Adrenal gland (tissue), 19 donors: ENCODE measurements at regions of chr1 and their contacts with region 1.

Region 1: DNA sequence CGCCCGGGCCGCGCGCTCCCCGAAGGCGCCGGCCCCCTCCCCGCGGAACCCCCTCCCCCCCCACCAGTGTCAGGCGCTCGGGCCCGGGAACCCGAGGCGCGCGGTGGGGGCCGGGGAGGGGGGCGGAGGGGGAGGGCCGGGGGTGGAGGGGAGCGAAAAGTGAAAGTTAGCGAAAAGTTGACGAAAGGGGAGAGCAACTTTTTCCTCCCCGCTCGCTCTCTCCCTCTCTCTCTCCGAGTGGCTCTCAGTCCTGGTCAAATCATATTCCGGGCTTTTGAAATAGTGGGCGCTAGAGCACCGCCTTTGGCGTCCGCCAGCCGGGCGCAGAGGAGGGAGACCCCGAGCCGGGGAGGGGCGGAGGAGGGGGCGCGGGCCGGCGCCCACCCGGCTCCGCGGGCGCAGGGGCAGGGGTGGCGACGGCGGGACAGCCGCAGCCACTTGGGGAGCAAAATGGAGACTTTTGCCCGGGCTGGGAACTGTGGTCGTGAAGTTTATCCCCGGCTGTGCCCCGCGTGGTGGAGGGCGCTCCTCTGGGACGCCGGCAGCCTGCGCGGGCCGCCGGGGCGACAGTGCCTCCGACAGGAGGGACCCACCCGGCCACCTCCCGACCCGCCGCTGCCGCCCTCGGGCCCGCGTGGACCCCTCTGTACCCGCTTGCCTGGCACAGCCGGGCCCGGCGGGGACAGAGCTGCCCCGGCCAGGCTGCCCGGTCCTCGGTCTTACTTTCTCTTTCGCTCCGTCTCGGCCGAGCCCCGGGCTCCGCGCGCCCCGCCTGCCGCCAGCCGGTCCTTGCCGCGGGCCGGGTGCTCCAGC is 694 bp downstream of the PRDM16 start:
- DNase-seq: peak in 6 of 7 donors; percentile 29 to 42 (median 30)
- H3K4me3 ChIP-seq: peak overlapping the region in 2 of 4 donors; percentile 62 to 92
- H3K27ac ChIP-seq: peak overlapping the region in 1 of 5 donors; percentile 49
- H3K4me1 ChIP-seq: peaks cover 0 to 13% of the 10 kb centered on the region in 2 donors
- H3K27me3 ChIP-seq: peaks cover 80% of the 10 kb centered on the region
- CTCF ChIP-seq: peak in 1 of 6 experiments; percentile 6
- POLR2A ChIP-seq: no peak

Region 2: GRCh38 chr1:3275471-3276340 is 206.0 kb after region 1 on chr1:
- intact Hi-C with region 1: loop called (anchors 5 to 10 kb)
- DNase-seq: no peak
- H3K4me3 ChIP-seq: no peak overlapping the region
- H3K27ac ChIP-seq: no peak overlapping the region
- H3K4me1 ChIP-seq: no peaks in the 10 kb centered on the region
- H3K27me3 ChIP-seq: peaks cover 3% of the 10 kb centered on the region
- CTCF ChIP-seq: no peak
- POLR2A ChIP-seq: no peak

Region 3: DNA sequence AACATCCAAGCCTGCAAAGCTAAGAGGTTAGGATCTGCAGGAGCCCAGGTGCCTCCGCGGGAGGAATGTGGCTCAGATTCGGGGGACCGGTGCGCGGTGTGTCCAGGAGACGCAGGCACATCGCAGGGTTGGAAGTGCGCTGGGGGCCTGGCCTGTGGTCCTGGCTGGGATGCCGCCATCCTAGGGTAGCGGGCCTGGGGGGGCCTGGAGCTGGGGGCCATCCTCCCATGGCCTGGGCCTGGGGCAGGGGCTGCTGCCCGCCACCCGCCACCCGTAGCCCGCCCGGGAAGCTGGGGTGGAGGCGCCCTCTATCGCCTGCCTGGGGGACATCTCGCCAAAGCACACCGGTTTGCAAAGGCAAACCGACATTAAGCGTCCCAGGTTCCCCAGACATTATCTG is 214.2 kb after region 1 on chr1:
- intact Hi-C with region 1: loop called (anchors 5 to 10 kb)
- DNase-seq: peak in 5 of 7 donors; percentile 27 to 42 (median 37)
- H3K4me3 ChIP-seq: no peak overlapping the region
- H3K27ac ChIP-seq: no peak overlapping the region
- H3K4me1 ChIP-seq: no peaks in the 10 kb centered on the region
- H3K27me3 ChIP-seq: peaks cover 28% of the 10 kb centered on the region
- CTCF ChIP-seq: peak; percentile 45 to 66 (median 55)
- POLR2A ChIP-seq: no peak